ENCODE measurements at regions of chr12 and their contacts with region 1.

Region 1: GRCh38 chr12:15151161-15152120 is 69.8 kb downstream of the RERG start:
- DNase-seq: no peak
- ATAC-seq: peak in 3 of 4 donors; percentile 76 to 84 (median 82)
- H3K4me3 ChIP-seq: no peak overlapping the region
- H3K27ac ChIP-seq: no peak overlapping the region
- H3K4me1 ChIP-seq: peaks cover 0 to 3% (median 0%) of the 10 kb centered on the region in 3 donors
- H3K27me3 ChIP-seq: no peaks in the 10 kb centered on the region
- CTCF ChIP-seq: peak in 2 of 4 donors; percentile 31 to 40

Region 2: GRCh38 chr12:15088105-15088504 is 63.3 kb before region 1 on chr12:
- intact Hi-C with region 1: no loop called
- DNase-seq: no peak
- ATAC-seq: no peak
- H3K4me3 ChIP-seq: no peak overlapping the region
- H3K27ac ChIP-seq: no peak overlapping the region
- H3K4me1 ChIP-seq: no peaks in the 10 kb centered on the region
- H3K27me3 ChIP-seq: no peaks in the 10 kb centered on the region
- CTCF ChIP-seq: no peak

Region 3: GRCh38 chr12:15209782-15210181 is 58.3 kb after region 1 on chr12:
- intact Hi-C with region 1: loop called in 1 of 3 experiments (anchors 10 kb)
- DNase-seq: no peak
- ATAC-seq: peak in 1 of 4 donors; percentile 57
- H3K4me3 ChIP-seq: no peak overlapping the region
- H3K27ac ChIP-seq: no peak overlapping the region
- H3K4me1 ChIP-seq: no peaks in the 10 kb centered on the region
- H3K27me3 ChIP-seq: no peaks in the 10 kb centered on the region
- CTCF ChIP-seq: no peak

Region 4: GRCh38 chr12:15220994-15221885 is 69.8 kb after region 1 on chr12 and contains the start of gene RERG:
- intact Hi-C with region 1: loop called in 2 of 3 experiments (anchors 5 to 10 kb)
- DNase-seq: peak; percentile 61 to 97 (median 84)
- ATAC-seq: peak; percentile 99 to 100 (median 100)
- H3K4me3 ChIP-seq: peak within 1 kb of the TSS; percentile 22 to 52 (median 30)
- H3K27ac ChIP-seq: peak within 1 kb of the TSS; percentile 3 to 77 (median 49)
- H3K4me1 ChIP-seq: no peaks in the 10 kb centered on the region
- H3K27me3 ChIP-seq: no peaks in the 10 kb centered on the region
- CTCF ChIP-seq: peak; percentile 96 to 98 (median 98)
- total RNA-seq, gene RERG: 2.0 to 10.4 (median 5.2) TPM